ENCODE measurements at regions of chr16 and their contacts with region 1.

Region 1: DNA sequence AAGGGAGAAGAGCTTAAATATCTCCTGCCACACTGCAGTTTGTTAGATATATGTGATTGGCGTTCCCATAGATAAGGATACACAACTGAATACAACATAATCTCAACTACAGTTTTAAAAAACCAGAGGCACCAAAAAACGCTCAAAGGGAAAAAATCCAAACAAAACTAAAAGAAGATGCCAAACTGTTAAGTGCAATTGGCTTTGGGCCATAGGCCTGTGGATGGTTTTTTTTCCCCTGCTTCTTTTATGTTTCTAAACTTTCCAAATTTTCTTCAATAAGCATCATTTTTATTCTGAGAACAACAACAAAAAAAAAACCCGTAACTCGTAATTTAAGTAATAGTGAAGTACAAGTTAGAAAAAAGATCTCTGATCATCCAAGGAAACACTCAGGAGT is 22.2 kb downstream of the MARF1 start:
- DNase-seq: no peak
- ATAC-seq: no peak
- H3K4me3 ChIP-seq: no peak overlapping the region
- H3K4me3 Mint-ChIP-seq: no peak overlapping the region
- H3K27ac ChIP-seq: no peak overlapping the region
- H3K27ac Mint-ChIP-seq: peak overlapping the region in 2 of 9 donors; percentile 63 to 78
- H3K4me1 ChIP-seq: no peaks in the 10 kb centered on the region
- H3K4me1 Mint-ChIP-seq: peaks cover 0 to 5% (median 2%) of the 10 kb centered on the region in 7 donors
- H3K27me3 ChIP-seq: no peaks in the 10 kb centered on the region
- H3K27me3 Mint-ChIP-seq: no peaks in the 10 kb centered on the region

Region 2: DNA sequence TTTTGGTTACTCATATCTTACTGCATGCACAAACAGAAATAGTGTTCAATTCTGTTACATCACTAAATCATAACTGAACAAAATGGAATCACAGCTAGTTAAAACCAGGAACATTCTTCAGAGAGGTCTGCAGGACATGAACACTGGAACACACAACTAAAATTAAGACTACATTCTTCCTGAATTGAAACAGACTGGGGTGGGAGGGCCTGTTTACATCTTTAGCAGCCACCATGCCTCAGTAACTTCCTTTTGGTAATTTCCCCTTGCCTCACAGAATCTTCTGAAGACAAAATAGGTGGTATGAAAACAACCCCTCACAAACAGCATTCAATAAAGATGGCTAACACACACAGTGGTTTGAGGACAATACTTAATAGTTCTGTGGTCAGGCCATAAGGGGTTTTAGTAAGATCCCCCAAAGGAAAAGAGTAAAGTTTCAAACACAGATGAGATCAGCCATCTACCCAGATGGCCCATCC is 15.6 kb after region 1 on chr16:
- CTCF ChIA-PET with region 1: interaction called, 3 read pairs
- POLR2A ChIA-PET with region 1: interaction called, 12 read pairs
- intact Hi-C with region 1: no loop called
- DNase-seq: peak in 7 of 9 donors; percentile 26 to 54 (median 37)
- ATAC-seq: peak; percentile 87
- H3K4me3 ChIP-seq: peak overlapping the region; percentile 1
- H3K4me3 Mint-ChIP-seq: peak overlapping the region; percentile 21 to 91 (median 76)
- H3K27ac ChIP-seq: peak overlapping the region; percentile 68
- H3K27ac Mint-ChIP-seq: peak overlapping the region; percentile 89 to 96 (median 95)
- H3K4me1 ChIP-seq: peaks cover 37 to 47% of the 10 kb centered on the region in 2 donors
- H3K4me1 Mint-ChIP-seq: peaks cover 37 to 87% (median 66%) of the 10 kb centered on the region in 7 donors
- H3K27me3 ChIP-seq: no peaks in the 10 kb centered on the region
- H3K27me3 Mint-ChIP-seq: no peaks in the 10 kb centered on the region

Measured in naive thymus-derived CD4-positive, alpha-beta T cell (primary cell).